Posterior cingulate gyrus (tissue), 11 donors: ENCODE measurements at regions of chr22 and their contacts with region 1.

Region 1: GRCh38 chr22:35430897-35431322 is 31.0 kb downstream of the MCM5 start:
- DNase-seq: peak; percentile 72 to 98 (median 88)

Region 2: DNA sequence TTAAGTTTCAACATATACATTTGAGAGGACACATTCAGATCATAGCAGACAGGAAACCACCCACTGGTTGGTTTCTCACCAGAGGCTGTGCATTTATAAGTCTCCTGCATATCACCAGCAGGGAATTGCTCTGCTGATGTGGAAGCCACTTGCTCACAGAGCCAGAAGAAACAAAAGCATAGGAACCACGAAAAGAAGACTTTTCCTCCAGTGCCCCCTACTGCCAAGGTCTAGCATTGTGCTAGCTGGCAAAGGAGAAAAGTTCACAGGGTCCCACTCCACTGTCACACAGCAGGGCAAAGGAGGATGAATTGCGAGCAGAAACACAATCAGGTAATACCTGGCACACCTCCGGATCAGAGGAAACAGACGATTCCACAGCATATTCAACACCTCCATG is 393.8 kb before region 1 on chr22:
- intact Hi-C with region 1: no loop called
- DNase-seq: peak in 1 of 10 donors; percentile 15

Region 3: DNA sequence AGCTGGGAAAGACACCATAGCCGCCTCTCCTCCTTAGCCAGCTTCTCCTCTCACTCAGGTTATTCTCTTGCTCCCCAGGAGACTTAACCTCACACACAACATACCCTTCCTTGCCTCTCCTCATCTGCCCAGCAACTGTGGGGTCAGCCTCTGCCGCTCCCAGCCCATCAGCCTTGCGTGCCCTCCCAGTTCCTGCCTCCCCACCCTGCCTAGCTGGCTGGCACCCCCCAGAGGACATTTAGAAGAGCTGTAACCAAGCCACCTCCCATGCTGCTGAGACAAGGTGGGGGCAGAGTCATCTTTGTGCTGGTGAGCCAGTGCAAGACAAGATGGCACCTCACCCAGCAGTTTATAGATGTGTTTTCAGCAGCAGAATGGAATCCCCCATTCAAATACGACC is 93.0 kb before region 1 on chr22:
- intact Hi-C with region 1: no loop called
- DNase-seq: no peak

Region 4: GRCh38 chr22:35397095-35397904 is 33.6 kb before region 1 on chr22:
- intact Hi-C with region 1: no loop called
- DNase-seq: peak in 1 of 10 donors; percentile 47

Region 5: GRCh38 chr22:35446365-35446764 is 15.5 kb after region 1 on chr22:
- intact Hi-C with region 1: no loop called
- DNase-seq: peak in 7 of 10 donors; percentile 38 to 94 (median 68)

Region 6: GRCh38 chr22:35582861-35583670 is 152.2 kb after region 1 on chr22:
- intact Hi-C with region 1: loop called (anchors 1 kb)
- DNase-seq: peak; percentile 45 to 94 (median 65)